CD4-positive, alpha-beta memory T cell (primary cell): ENCODE measurements at regions of chr6 and their contacts with region 1.

Region 1: GRCh38 chr6:88963139-88964090 is at the start of gene RNGTT:
- DNase-seq: peak; percentile 95 to 96 (median 96)
- H3K4me3 ChIP-seq: peak within 1 kb of the TSS; percentile 79 to 99
- H3K4me3 Mint-ChIP-seq: peak within 1 kb of the TSS; percentile 90 to 99 (median 98)
- H3K27ac ChIP-seq: peak within 1 kb of the TSS; percentile 68
- H3K27ac Mint-ChIP-seq: peak within 1 kb of the TSS; percentile 88 to 98 (median 97)
- H3K4me1 ChIP-seq: peaks cover 30% of the 10 kb centered on the region
- H3K4me1 Mint-ChIP-seq: peaks cover 27 to 56% (median 34%) of the 10 kb centered on the region in 4 donors
- H3K27me3 ChIP-seq: no peaks in the 10 kb centered on the region
- H3K27me3 Mint-ChIP-seq: no peaks in the 10 kb centered on the region
- total RNA-seq, gene RNGTT: 17.4 to 21.8 TPM

Region 2: GRCh38 chr6:88502391-88502790 is 461.0 kb before region 1 on chr6:
- CTCF ChIA-PET with region 1: no interaction called
- POLR2A ChIA-PET with region 1: no interaction called
- intact Hi-C with region 1: no loop called
- DNase-seq: no peak
- H3K4me3 ChIP-seq: no peak overlapping the region
- H3K4me3 Mint-ChIP-seq: no peak overlapping the region
- H3K27ac ChIP-seq: no peak overlapping the region
- H3K27ac Mint-ChIP-seq: peak overlapping the region in 1 of 7 donors; percentile 48
- H3K4me1 ChIP-seq: no peaks in the 10 kb centered on the region
- H3K4me1 Mint-ChIP-seq: no peaks in the 10 kb centered on the region
- H3K27me3 ChIP-seq: no peaks in the 10 kb centered on the region
- H3K27me3 Mint-ChIP-seq: peaks cover 2 to 9% of the 10 kb centered on the region in 2 donors

Region 3: DNA sequence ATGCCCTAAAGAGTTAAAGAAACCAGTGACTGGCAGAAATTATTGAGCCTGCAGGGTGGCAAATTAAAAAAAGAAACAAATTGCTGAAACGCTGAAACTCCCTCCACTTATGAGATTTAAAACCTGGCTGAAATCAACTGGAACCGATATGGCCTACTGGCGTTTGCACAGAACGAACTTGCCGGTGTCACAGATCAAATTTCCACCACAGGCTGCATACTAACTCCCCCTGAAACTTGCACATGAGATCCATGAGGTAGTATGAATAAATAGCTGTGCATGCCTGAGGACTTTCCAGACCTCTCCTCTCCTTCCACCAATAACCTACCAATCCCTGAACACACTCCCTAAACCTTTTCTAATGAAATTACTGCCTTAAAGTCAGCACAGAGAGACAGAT is 150.4 kb before region 1 on chr6:
- CTCF ChIA-PET with region 1: no interaction called
- POLR2A ChIA-PET with region 1: no interaction called
- intact Hi-C with region 1: no loop called
- DNase-seq: no peak
- H3K4me3 ChIP-seq: no peak overlapping the region
- H3K4me3 Mint-ChIP-seq: no peak overlapping the region
- H3K27ac ChIP-seq: no peak overlapping the region
- H3K27ac Mint-ChIP-seq: no peak overlapping the region
- H3K4me1 ChIP-seq: no peaks in the 10 kb centered on the region
- H3K4me1 Mint-ChIP-seq: peaks cover 0 to 12% (median 5%) of the 10 kb centered on the region in 4 donors
- H3K27me3 ChIP-seq: no peaks in the 10 kb centered on the region
- H3K27me3 Mint-ChIP-seq: no peaks in the 10 kb centered on the region

Region 4: DNA sequence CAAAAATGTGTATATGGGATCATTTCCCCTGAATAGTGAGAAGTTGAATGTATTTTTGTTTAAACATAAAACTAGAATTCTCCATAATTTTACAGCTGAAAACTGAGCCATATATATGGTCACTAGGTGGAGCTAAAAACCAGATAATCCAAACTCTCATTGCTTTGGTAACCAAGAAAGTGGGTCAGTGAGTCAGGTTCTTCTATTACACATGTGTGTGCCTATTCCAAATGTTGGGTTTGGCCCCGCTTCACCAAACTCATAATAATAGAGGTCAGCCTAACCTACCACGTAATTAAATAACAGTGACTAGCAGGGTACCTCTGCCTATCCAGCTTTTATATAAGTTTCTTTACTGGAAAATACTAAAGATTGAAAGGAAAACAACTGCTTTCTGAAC is 19.3 kb after region 1 on chr6:
- CTCF ChIA-PET with region 1: interaction called, 11 read pairs
- POLR2A ChIA-PET with region 1: no interaction called
- intact Hi-C with region 1: loop called (anchors 1 kb)
- DNase-seq: peak in 4 of 5 donors; percentile 55 to 66 (median 62)
- H3K4me3 ChIP-seq: no peak overlapping the region
- H3K4me3 Mint-ChIP-seq: no peak overlapping the region
- H3K27ac ChIP-seq: no peak overlapping the region
- H3K27ac Mint-ChIP-seq: no peak overlapping the region
- H3K4me1 ChIP-seq: no peaks in the 10 kb centered on the region
- H3K4me1 Mint-ChIP-seq: no peaks in the 10 kb centered on the region
- H3K27me3 ChIP-seq: no peaks in the 10 kb centered on the region
- H3K27me3 Mint-ChIP-seq: no peaks in the 10 kb centered on the region

Region 5: DNA sequence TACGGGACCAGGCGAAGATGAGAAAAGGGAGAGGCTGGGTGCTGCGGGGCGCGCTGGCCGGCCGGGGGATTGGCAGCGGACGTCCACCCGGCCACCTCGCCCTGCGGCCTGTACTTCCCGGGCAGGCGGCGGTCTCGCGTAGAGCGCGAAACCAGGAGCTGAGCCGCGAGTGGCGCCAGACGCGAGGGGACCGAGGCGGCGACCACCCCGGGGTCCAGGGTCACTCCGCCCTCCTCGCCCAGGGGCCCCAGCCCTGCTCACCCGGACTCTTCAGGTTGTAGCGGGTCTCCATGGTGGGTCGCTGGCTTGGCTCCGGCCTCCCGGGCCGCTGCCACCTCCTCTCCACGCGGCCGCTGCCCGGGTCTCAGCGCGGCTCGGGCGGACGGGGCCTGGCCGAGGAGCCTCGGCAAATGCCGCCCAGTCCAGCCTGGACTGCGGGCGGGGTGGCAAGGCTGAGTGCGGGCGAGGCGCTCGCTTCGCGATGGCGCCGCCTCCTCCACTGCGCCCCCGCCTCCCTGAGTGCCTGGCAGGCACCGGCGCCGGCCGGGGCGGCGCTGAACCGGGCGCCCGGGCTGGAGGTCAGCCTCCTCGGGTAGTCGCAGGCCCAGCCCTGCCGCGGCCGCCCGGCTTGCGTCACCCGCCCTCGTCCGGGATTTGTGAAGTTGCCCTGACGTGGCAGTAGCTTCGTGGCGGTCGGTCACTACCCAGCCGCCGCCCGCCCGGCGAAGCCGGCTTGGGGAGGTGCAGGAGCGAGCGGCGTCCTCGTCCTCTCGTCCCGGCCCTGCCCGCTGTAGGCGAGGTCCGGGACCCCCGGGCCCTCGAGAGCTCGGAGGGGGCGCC is 389.1 kb after region 1 on chr6 and contains the start of gene UBE2J1:
- CTCF ChIA-PET with region 1: interaction called, 4 read pairs
- POLR2A ChIA-PET with region 1: interaction called, 22 read pairs
- intact Hi-C with region 1: loop called (anchors 5 kb)
- DNase-seq: peak; percentile 67 to 75 (median 71)
- H3K4me3 ChIP-seq: peak within 1 kb of the TSS; percentile 1 to 90
- H3K4me3 Mint-ChIP-seq: peak within 1 kb of the TSS; percentile 92 to 99 (median 98)
- H3K27ac ChIP-seq: peak within 1 kb of the TSS; percentile 89
- H3K27ac Mint-ChIP-seq: peak within 1 kb of the TSS; percentile 86 to 99 (median 98)
- H3K4me1 ChIP-seq: peaks cover 69% of the 10 kb centered on the region
- H3K4me1 Mint-ChIP-seq: peaks cover 44 to 82% (median 61%) of the 10 kb centered on the region in 4 donors
- H3K27me3 ChIP-seq: no peaks in the 10 kb centered on the region
- H3K27me3 Mint-ChIP-seq: no peaks in the 10 kb centered on the region
- total RNA-seq, gene UBE2J1: 21.9 to 22.6 TPM

Region 6: GRCh38 chr6:89638320-89639195 is 675.1 kb after region 1 on chr6 and contains the start of gene LYRM2:
- CTCF ChIA-PET with region 1: no interaction called
- POLR2A ChIA-PET with region 1: interaction called, 11 read pairs
- intact Hi-C with region 1: loop called (anchors 1 kb)
- DNase-seq: peak; percentile 90 to 94 (median 92)
- H3K4me3 ChIP-seq: peak within 1 kb of the TSS; percentile 97 to 99
- H3K4me3 Mint-ChIP-seq: peak within 1 kb of the TSS; percentile 95 to 98 (median 96)
- H3K27ac ChIP-seq: peak within 1 kb of the TSS; percentile 95
- H3K27ac Mint-ChIP-seq: peak within 1 kb of the TSS; percentile 98 to 100 (median 99)
- H3K4me1 ChIP-seq: peaks cover 18% of the 10 kb centered on the region
- H3K4me1 Mint-ChIP-seq: peaks cover 20 to 45% (median 29%) of the 10 kb centered on the region in 4 donors
- H3K27me3 ChIP-seq: no peaks in the 10 kb centered on the region
- H3K27me3 Mint-ChIP-seq: no peaks in the 10 kb centered on the region
- total RNA-seq, gene LYRM2: 31.8 to 36.7 TPM